Motor neuron (in vitro differentiated cells): ENCODE measurements at regions of chr5 and their contacts with region 1.

Region 1: DNA sequence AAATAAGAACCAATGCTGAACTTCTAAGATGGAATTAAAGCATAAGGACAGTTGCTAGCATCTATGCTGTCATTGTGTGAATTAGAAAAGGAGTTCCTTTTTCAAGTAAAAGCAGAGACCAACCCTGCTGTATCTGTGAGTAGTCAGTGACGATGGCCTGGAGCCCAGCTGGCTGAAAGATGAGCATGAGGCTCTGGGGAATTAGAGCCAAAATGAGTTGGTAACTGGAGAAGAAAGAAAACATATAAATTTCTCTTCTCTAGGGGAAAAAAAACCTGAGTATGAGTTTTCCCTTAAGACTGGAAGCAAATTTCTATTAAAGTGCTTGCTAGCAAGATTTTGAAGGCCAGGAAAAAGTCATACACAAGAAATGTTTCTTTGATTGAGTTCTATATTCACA is 1.6 kb upstream of the SPZ1 start:
- ATAC-seq: peak in 3 of 8 experiments; percentile 26 to 33 (median 31)
- H3K4me3 ChIP-seq: no peak overlapping the region
- H3K27ac ChIP-seq: no peak overlapping the region
- H3K4me1 ChIP-seq: peaks cover 0 to 8% of the 10 kb centered on the region in 2 donors

Region 2: GRCh38 chr5:79878721-79879336 is 439.4 kb before region 1 on chr5:
- in situ Hi-C with region 1: loop called in 1 of 9 experiments (anchors 25 kb)
- ATAC-seq: peak in 3 of 8 experiments; percentile 71 to 78 (median 78)
- H3K4me3 ChIP-seq: no peak overlapping the region
- H3K27ac ChIP-seq: no peak overlapping the region
- H3K4me1 ChIP-seq: no peaks in the 10 kb centered on the region

Region 3: DNA sequence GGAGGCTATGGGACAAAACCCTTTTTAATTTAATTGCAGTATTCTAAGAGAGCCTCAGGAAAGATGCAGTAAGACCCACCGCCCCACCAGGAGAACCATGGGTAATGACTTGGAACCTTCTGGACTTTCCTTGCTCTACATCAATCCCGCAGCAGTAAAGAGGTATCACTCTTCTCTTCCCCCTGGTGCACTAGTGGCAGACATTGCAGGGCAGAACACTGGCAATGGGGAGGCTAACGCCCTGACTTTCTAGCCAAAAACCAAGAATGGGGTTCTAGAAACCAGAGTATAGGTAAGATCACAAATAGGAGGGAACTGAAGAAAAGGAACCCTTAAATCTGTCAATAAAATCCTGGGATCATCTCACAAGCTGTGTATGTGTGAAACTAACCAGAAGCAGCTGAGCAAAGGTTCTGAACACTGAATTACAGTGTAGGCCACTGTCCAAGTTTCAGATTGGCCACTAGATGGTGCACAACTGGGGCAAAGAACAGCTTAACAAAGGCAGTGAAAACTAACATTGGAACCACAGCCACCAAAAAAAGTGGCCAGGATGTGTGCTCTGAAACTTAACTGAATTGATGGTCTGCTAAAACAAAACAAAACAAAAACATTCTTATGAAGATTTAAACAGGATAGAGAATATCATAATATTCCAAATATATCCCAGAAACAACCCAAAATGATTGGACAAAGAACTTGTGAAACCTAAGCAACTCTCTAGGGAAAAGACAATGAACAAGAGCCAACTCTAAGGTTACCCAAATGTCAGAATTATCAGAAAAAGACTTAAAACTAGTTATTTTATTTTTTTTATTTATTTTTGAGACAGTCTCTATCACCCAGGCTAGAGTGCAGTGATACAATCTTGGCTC is 163.0 kb after region 1 on chr5:
- in situ Hi-C with region 1: no loop called
- ATAC-seq: peak; percentile 38 to 90 (median 72)
- H3K4me3 ChIP-seq: no peak overlapping the region
- H3K27ac ChIP-seq: no peak overlapping the region
- H3K4me1 ChIP-seq: no peaks in the 10 kb centered on the region

Region 4: GRCh38 chr5:80711938-80712337 is 393.7 kb after region 1 on chr5:
- in situ Hi-C with region 1: no loop called
- ATAC-seq: peak in 6 of 8 experiments; percentile 40 to 92 (median 68)
- H3K4me3 ChIP-seq: no peak overlapping the region
- H3K27ac ChIP-seq: no peak overlapping the region
- H3K4me1 ChIP-seq: no peaks in the 10 kb centered on the region

Region 5: DNA sequence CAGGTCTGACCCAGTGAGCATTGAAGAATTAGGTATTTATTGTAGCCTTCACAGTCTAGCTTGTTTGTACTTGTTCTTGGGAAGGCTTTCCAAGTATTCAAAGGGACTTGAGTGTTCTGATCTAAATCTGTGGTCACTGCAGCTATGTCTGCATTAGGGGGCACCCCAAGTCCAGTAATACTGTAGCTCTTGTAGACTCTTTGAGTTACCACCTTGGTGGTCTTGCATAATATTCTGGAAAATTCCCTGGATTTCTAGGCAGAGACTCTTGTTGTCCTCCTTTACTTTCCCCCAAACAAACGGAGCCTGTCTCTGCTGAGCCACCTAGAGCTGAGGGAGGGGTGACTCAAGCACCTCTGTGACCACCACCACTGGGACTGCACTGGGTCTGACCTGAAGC is 486.1 kb after region 1 on chr5:
- in situ Hi-C with region 1: no loop called
- ATAC-seq: no peak
- H3K4me3 ChIP-seq: no peak overlapping the region
- H3K27ac ChIP-seq: no peak overlapping the region
- H3K4me1 ChIP-seq: no peaks in the 10 kb centered on the region